Ovary (tissue), 10 donors: ENCODE measurements at regions of chr2 and their contacts with region 1.

Region 1: GRCh38 chr2:28751252-28751955 is at the start of gene PPP1CB:
- DNase-seq: peak; percentile 95 to 97 (median 96)
- H3K4me3 ChIP-seq: peak within 1 kb of the TSS; percentile 99
- H3K27ac ChIP-seq: peak within 1 kb of the TSS; percentile 98 to 99
- H3K4me1 ChIP-seq: peaks cover 4% of the 10 kb centered on the region
- H3K27me3 ChIP-seq: no peaks in the 10 kb centered on the region
- CTCF ChIP-seq: peak; percentile 11 to 73 (median 59)
- EP300 ChIP-seq: peak; percentile 16
- POLR2A ChIP-seq: peak; percentile 94
- total RNA-seq, gene PPP1CB: 229 to 421 (median 313) TPM

Region 2: DNA sequence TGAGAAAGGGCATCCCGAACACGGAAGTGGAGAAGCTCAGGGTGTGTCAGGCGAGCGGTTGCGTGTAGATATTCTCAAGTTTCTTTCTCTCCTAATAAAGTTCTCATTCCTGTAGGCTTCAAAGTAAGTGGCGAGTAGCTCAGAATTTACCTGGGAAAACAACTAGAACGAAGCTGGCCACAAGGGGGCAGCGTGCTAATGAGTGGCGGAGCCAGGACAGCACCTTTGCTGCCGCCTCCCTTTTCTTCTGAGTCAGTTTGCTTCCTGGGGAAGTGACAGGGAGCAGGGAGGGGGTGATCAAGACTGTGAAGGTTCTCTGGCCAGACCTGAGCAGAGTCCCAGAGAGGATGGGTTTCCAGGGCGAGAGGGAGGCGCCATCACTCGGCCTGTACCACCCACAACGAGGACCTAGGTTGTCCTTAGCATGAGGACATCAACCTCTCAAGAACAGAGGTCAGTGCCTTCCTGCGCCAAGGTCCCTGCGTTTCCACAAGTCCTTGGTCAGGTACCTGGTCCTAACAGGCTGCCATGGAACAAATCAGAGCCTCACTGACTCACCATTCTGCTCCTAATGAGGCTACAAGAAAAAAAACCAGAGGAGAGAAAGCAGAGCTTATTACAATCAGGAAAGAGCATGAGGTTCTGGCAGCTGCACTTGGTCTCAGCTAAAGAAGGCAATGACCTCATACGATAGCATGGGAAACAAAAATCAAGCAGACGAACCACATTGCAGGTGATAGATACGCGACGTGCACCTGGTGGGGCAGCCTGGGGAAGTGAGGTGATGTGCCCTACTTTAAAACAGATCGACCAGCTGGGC is 156.9 kb before region 1 on chr2:
- intact Hi-C with region 1: loop called (anchors 1 to 10 kb)
- DNase-seq: peak; percentile 91 to 94 (median 92)
- H3K4me3 ChIP-seq: no peak overlapping the region
- H3K27ac ChIP-seq: peak overlapping the region; percentile 55 to 82
- H3K4me1 ChIP-seq: peaks cover 7% of the 10 kb centered on the region
- H3K27me3 ChIP-seq: no peaks in the 10 kb centered on the region
- CTCF ChIP-seq: peak; percentile 85 to 91 (median 86)
- EP300 ChIP-seq: no peak
- POLR2A ChIP-seq: no peak

Region 3: GRCh38 chr2:28621172-28622100 is 130.0 kb before region 1 on chr2:
- intact Hi-C with region 1: loop called in 3 of 4 experiments (anchors 5 to 10 kb)
- DNase-seq: peak; percentile 59 to 91 (median 66)
- H3K4me3 ChIP-seq: no peak overlapping the region
- H3K27ac ChIP-seq: peak overlapping the region; percentile 44 to 57
- H3K4me1 ChIP-seq: peaks cover 19% of the 10 kb centered on the region
- H3K27me3 ChIP-seq: no peaks in the 10 kb centered on the region
- CTCF ChIP-seq: no peak
- EP300 ChIP-seq: peak; percentile 71
- POLR2A ChIP-seq: peak; percentile 20

Region 4: DNA sequence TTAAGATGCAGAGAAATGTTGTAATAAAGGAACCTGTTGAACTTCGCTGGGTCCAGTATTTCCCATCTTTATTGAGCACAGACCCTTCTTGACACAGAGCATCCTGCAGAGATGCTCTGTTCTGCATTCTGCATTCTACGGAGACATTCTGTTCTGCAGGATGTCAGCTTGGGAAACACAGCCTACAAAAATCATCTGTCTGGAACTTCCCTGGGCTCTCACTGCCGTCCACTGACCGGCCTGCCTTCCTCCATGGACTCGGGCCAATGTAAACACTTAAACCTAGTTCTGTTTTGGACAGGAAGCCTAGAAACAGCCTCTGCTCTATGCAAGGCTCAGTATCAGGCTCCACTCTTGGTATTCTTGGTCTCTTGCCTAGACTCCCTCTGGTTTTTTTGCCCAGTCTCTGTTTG is 89.8 kb before region 1 on chr2:
- intact Hi-C with region 1: loop called in 2 of 4 experiments (anchors 10 kb)
- DNase-seq: peak; percentile 61 to 80 (median 80)
- H3K4me3 ChIP-seq: no peak overlapping the region
- H3K27ac ChIP-seq: no peak overlapping the region
- H3K4me1 ChIP-seq: peaks cover 33% of the 10 kb centered on the region
- H3K27me3 ChIP-seq: no peaks in the 10 kb centered on the region
- CTCF ChIP-seq: no peak
- EP300 ChIP-seq: no peak
- POLR2A ChIP-seq: no peak

Region 5: DNA sequence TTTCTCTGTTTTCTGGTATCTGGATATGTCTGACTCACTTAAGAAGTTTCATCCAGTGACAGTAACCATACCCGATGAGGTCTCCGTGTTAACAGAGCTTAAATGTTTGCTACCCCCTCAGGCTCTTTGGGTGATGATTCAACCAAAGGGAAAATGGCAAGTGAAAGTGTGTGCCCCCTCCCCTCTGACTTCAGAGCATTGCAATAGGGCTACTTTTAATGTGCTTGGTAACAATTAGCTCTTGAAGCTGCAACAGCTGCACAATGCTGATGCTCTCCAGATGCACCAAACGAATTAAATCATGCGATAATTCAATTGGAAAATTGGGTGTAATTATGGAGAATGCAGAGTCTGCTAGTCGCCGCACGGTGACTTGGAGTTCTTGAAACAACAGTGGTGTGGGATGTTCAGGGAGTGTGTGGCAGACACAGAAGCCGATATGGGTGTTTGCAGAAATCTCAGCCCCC is 899.3 kb after region 1 on chr2:
- intact Hi-C with region 1: no loop called
- DNase-seq: no peak
- H3K4me3 ChIP-seq: no peak overlapping the region
- H3K27ac ChIP-seq: no peak overlapping the region
- H3K4me1 ChIP-seq: no peaks in the 10 kb centered on the region
- H3K27me3 ChIP-seq: no peaks in the 10 kb centered on the region
- CTCF ChIP-seq: no peak
- EP300 ChIP-seq: no peak
- POLR2A ChIP-seq: no peak